HAP-1 (cell line): ENCODE measurements at regions of chr1 and their contacts with region 1.

Region 1: DNA sequence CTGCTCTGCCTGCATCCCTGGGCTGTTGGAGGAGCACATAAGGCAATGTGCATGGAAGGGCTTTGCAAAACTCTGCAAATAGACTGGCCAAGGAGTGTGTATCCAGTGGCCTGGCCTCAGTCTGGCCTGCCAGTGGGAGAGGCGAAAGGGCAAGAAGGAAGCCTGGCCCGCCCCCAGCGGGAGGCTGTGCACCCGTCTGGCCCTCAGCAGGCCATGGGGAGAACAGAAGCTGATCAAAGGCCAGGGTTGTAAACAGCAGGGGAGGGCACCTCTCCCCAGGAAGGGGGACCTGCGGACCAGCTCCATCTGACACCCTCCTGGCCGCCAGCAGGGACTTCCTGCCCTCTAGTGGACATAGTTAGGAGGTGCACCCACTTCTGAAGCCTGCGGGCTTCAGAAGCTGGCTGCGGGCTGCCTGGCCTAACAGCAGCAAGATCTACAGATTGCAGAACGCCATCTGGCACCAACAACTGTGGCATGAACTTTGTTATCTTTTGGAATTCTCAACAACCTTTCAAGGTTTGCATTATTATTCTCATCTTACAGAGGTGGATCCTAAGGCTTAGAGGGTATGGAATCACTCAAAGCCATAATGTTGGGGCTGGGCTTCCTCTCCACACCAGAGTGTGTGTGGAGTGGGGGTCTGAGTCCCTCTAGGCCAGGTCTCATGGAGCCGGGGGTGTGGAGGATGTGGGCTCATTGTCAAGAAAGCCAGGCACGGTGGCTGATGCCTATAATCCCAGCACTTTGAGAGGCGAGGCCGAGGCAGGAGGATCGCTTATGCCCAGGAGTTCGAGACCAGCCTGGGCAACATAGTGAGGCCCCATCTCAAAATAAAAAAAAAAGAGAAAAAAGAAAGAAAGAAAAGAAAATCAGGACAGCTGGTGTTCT is 18.9 kb upstream of the CDK18 start:
- DNase-seq: peak; percentile 66 to 80
- H3K4me3 ChIP-seq: no peak overlapping the region
- H3K4me1 ChIP-seq: peaks cover 5% of the 10 kb centered on the region
- H3K27me3 ChIP-seq: peaks cover 16% of the 10 kb centered on the region

Region 2: DNA sequence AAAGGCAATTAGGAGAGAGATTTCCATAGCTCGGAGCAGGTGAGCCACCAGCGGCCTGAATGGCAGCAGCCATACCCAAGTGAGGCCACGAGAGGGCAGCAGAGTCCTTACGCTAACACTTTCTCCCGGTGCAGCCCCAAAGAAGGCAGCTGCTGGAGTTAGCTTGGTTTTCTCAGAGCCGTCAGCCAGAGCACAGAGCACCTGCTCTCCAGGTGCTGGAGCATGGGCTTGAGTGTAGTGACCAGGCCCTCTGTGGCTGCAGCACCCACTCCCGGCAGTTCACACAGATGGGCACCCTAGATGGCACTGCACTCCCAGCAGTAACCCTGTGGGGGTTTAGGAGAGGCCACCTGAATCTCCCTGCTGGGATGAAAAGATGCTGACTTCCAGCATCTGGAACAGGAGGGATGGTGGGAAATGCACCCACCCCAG is 212.0 kb before region 1 on chr1:
- in situ Hi-C with region 1: loop called (anchors 10 kb)
- DNase-seq: peak; percentile 75 to 89
- H3K4me3 ChIP-seq: no peak overlapping the region
- H3K4me1 ChIP-seq: peaks cover 6% of the 10 kb centered on the region; the same call in 1 of the 2 replicates
- H3K27me3 ChIP-seq: no peaks in the 10 kb centered on the region

Region 3: GRCh38 chr1:205335643-205336091 is 149.9 kb before region 1 on chr1:
- in situ Hi-C with region 1: loop called (anchors 5 kb)
- DNase-seq: peak; percentile 73 to 92
- H3K4me3 ChIP-seq: no peak overlapping the region
- H3K4me1 ChIP-seq: no peaks in the 10 kb centered on the region; the same call in 1 of the 2 replicates
- H3K27me3 ChIP-seq: no peaks in the 10 kb centered on the region

Region 4: DNA sequence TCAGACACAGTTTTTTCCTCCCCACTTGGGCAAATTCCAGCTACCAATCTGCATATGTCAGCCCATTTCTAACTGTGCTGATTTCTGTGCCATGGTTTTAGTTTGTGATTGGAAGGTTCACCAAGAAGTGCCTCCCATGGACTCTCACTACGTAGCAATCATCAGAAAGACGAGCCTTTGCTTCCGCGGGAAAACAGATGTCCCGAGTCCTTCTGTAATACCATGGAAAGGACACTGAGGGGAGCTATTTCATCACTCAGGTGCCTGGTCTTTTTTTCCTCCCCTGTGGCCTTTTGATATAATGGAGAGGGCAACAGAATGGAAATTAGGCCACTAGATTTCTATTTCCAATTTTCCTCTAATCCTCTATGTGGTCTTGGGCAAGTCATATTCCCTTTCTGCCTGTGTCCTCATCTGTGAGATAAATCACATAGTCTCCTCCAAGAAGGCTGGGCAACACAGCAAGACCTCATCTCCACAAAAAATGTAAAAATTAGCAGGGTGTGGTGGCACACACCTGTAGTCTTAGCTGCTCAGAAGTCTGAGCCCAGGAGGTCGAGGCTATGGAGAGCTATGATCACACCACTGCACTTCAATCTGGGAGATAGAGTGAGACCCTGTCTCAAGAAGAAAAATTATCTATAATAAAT is 88.5 kb before region 1 on chr1:
- in situ Hi-C with region 1: loop called (anchors 5 kb)
- DNase-seq: peak; percentile 72 to 89
- H3K4me3 ChIP-seq: no peak overlapping the region
- H3K4me1 ChIP-seq: peaks cover 4% of the 10 kb centered on the region; the same call in 1 of the 2 replicates
- H3K27me3 ChIP-seq: peaks cover 2% of the 10 kb centered on the region; the same call in 1 of the 2 replicates

Region 5: DNA sequence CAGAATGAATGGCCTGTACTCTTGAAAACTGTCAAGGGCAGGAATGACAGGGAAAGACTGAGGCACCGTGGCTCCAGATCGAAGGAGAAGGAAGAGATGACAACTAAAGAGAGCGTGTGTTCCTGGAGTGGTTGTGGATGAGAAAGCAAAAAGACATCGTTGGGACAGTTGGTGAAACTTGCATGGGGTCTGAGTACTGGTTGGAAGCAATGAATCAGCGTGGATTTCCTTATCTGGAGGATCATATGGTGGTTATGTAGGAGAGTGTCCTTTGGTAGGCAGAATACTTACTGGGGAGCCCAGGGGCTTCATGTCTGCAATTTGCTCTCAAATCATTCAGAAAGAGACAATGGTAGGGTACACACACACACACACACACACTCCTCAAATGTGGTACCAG is 77.6 kb before region 1 on chr1:
- in situ Hi-C with region 1: no loop called
- DNase-seq: no peak
- H3K4me3 ChIP-seq: no peak overlapping the region
- H3K4me1 ChIP-seq: peaks cover 16% of the 10 kb centered on the region
- H3K27me3 ChIP-seq: no peaks in the 10 kb centered on the region

Region 6: DNA sequence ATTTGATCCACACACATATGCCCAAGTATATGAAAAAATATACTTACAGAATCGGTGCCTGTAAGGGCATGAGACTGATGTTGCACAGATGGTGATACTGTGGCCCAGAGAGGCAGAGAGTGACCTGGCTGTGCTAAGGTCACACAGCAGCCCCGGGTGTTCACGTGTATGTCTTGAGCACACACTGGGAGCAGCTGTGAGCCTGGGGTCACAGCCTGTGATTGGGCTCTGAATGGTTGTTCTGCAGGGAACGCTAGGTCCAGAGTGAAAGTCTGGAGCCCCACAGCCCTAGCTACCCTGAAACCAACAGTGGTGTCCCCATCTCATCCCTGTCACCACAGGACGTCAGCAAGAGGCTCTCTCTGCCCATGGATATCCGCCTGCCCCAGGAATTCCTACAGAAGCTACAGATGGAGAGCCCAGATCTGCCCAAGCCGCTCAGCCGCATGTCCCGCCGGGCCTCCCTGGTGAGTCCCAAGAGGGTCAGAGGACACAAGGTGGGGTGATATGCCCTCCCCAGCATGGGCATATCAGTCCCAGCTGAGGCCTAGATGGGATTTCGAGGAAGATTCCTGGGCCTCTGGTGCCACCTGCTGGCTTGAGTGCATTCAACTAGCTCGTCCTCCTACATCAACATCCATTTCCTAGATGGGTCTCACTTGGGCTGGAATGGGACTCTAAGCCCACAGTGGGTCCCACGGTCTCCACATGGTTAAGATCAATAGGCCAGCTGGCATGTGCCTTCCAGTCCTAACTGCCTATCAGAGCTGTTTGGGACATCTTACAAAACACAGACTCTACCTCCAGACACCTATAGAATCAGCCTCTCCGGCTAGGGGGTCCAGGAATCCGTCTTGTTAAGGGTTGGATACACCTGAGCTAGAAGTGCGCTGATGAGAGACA is 38.6 kb after region 1 on chr1:
- in situ Hi-C with region 1: loop called (anchors 5 kb)
- DNase-seq: peak; percentile 54 to 87
- H3K4me3 ChIP-seq: no peak overlapping the region
- H3K4me1 ChIP-seq: peaks cover 18% of the 10 kb centered on the region
- H3K27me3 ChIP-seq: no peaks in the 10 kb centered on the region